Prostate gland (tissue), 2 donors: ENCODE measurements at regions of chr3 and their contacts with region 1.

Region 1: GRCh38 chr3:187223799-187224198 is 26.5 kb downstream of the RTP1 start:
- DNase-seq: no peak
- H3K4me3 ChIP-seq: no peak overlapping the region
- H3K27ac ChIP-seq: no peak overlapping the region
- H3K4me1 ChIP-seq: no peaks in the 10 kb centered on the region
- H3K27me3 ChIP-seq: no peaks in the 10 kb centered on the region
- CTCF ChIP-seq: peak in 1 of 4 experiments; percentile 23
- POLR2A ChIP-seq: no peak

Region 2: DNA sequence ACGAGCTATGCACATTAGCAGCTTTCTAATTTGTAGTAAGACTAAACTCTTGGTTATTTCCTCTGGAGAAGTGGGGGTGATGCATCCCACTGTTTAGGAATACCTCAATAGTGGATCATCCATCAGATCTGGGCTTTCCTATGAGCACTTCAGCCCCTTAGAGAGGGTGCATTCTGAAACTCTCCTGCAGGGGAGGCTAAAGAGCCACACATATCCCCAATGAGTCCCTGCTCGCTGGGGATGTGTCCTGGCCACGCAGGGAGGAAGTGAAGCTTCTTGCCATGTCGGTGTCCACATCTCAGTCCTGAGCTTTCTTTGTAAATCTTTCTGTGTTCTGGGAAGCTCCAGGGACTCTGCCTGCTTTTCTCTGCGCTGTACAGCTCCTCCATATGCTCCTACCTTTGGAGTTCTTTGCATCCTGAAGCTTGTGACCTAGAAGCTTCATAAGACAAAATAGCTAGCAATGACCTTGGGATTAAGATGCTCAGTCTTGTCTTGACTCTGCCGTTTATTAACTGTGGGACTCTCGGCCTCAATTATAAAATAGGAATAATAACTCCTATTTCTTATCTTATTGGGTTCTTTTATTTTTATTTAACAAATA is 96.0 kb after region 1 on chr3:
- intact Hi-C with region 1: loop called (anchors 2 kb)
- DNase-seq: peak; percentile 57
- H3K4me3 ChIP-seq: no peak overlapping the region
- H3K27ac ChIP-seq: no peak overlapping the region
- H3K4me1 ChIP-seq: no peaks in the 10 kb centered on the region
- H3K27me3 ChIP-seq: peaks cover 5% of the 10 kb centered on the region
- CTCF ChIP-seq: peak; percentile 77 to 95 (median 82)
- POLR2A ChIP-seq: no peak